Activated CD4-positive, alpha-beta T cell treated with anti-CD3 and anti-CD28 coated beads, Interleukin-2, amount 10 ng/mL, durations not matched to agents 7 days and 5 days (primary cell): ENCODE measurements at regions of chr12 and their contacts with region 1.

Region 1: DNA sequence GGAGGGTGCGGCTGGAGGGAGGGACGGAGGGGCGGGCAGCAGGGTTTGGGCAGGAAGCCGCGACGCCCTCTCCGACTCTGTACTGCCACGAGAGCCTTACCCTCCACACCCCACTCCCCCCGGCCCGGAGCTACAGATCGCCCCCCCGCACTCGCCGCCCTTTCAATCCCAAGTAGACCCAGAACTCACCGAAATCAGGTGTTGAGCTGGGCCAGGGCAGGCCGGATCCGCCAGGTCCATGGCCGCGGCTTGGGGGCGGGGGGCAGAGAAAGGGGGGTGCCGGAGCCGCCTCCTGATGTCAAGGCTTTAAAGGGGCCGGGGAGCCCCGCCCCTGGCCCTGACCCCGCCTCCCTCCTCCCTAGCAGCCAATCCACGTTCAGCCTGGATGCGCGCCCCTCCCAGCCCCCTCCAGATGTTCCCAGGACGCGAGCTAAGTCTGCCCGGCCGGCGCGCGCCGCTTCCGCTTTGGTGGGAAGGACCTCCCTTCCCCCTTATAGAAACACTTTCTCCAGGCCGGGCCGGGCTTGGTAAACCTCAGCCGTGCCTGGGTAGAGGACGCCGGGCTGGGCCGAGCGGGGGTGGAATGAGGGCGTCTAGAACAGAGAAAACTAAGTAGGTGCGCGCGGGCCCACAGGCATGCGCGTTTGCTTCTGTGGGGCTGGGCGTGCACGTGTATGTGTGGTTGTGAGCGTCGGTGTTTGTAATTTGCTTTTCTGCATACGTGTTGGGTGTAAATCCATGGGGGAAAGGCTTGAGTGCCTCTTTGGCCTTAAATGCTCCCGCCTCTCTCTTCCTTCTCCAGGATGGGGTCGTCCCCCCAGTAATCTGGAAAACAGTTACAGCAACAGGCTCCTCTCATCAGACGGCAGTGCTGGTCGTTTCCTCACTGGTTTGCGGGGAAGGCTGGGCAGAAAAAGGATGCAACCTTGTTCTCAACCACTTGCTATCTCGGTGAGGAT is at the start of gene NCKAP5L:
- DNase-seq: peak; percentile 94
- H3K4me3 Mint-ChIP-seq: peak within 1 kb of the TSS; percentile 87
- H3K27ac Mint-ChIP-seq: peak within 1 kb of the TSS; percentile 90
- H3K4me1 Mint-ChIP-seq: peaks cover 24% of the 10 kb centered on the region
- H3K27me3 Mint-ChIP-seq: peaks cover 3% of the 10 kb centered on the region
- total RNA-seq, gene NCKAP5L: 4.0 to 4.5 TPM

Region 2: GRCh38 chr12:49838973-49839633 is 10.7 kb after region 1 on chr12:
- CTCF ChIA-PET with region 1: interaction called, 17 read pairs
- POLR2A ChIA-PET with region 1: interaction called, 4 read pairs
- DNase-seq: peak; percentile 59
- H3K4me3 Mint-ChIP-seq: no peak overlapping the region
- H3K27ac Mint-ChIP-seq: no peak overlapping the region
- H3K4me1 Mint-ChIP-seq: peaks cover 29% of the 10 kb centered on the region
- H3K27me3 Mint-ChIP-seq: no peaks in the 10 kb centered on the region